HEK293 (cell line): ENCODE measurements at regions of chr1 and their contacts with region 1.

Region 1: GRCh38 chr1:32716312-32717148 is 14.0 kb upstream of the SYNC start:
- H3K4me3 ChIP-seq: no peak overlapping the region
- H3K27ac ChIP-seq: peak overlapping the region; percentile 3; the same call in 1 of the 2 replicates
- H3K4me1 ChIP-seq: no peaks in the 10 kb centered on the region
- CTCF ChIP-seq: no peak

Region 2: GRCh38 chr1:32521165-32521564 is 195.4 kb before region 1 on chr1:
- CTCF ChIA-PET with region 1: interaction called, 12 read pairs
- POLR2A ChIA-PET with region 1: no interaction called
- H3K4me3 ChIP-seq: no peak overlapping the region
- H3K27ac ChIP-seq: no peak overlapping the region
- H3K4me1 ChIP-seq: no peaks in the 10 kb centered on the region
- CTCF ChIP-seq: no peak

Region 3: GRCh38 chr1:32554288-32554687 is 162.2 kb before region 1 on chr1:
- CTCF ChIA-PET with region 1: no interaction called
- POLR2A ChIA-PET with region 1: no interaction called
- H3K4me3 ChIP-seq: no peak overlapping the region
- H3K27ac ChIP-seq: no peak overlapping the region
- H3K4me1 ChIP-seq: no peaks in the 10 kb centered on the region
- CTCF ChIP-seq: no peak

Region 4: GRCh38 chr1:32733582-32734321 is 17.2 kb after region 1 on chr1:
- CTCF ChIA-PET with region 1: interaction called, 18 read pairs
- POLR2A ChIA-PET with region 1: interaction called, 6 read pairs
- H3K4me3 ChIP-seq: no peak overlapping the region
- H3K27ac ChIP-seq: no peak overlapping the region
- H3K4me1 ChIP-seq: no peaks in the 10 kb centered on the region
- CTCF ChIP-seq: no peak

Region 5: DNA sequence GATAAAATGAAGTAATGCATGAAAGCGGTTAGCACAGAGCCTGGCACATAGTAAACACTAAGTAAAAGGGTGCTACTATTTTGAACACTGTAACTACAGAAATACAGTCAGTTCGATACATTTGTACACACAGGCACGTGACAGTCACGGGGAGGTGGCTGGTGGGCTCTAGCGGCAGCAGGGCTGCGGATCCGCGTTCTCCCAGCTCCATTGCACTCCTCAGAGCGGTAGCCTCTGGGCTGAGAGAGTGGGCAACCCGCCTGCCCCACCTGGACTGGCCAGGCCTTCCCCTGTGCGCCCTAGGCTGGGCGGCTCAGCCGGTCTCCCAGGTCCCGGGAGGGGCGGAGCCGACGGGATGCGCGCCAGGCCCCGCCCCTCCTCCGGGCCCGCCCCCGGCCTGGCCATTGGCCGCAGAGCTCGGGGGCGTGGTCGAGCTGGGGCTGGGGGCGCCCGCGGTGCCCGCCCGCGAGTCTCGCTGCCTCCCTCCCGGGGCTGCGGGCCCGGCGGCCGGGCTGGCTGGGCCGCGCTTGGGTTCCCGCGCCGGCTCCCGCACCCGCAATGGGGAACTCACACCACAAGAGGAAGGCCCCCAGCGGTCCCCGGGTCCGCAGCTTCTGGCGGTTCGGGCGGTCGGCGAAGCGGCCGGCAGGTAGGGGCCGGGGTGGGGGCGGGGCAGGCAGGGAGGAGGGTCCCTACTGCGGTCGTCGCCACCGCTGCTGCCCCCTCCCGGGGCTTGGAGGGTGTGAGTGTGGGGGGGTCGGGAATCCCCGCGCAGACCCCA is 37.2 kb after region 1 on chr1:
- CTCF ChIA-PET with region 1: interaction called, 16 read pairs
- POLR2A ChIA-PET with region 1: interaction called, 6 read pairs
- H3K4me3 ChIP-seq: peak overlapping the region; percentile 43
- H3K27ac ChIP-seq: no peak overlapping the region
- H3K4me1 ChIP-seq: peaks cover 2% of the 10 kb centered on the region; the same call in 1 of the 2 replicates
- CTCF ChIP-seq: no peak

Region 6: GRCh38 chr1:32773018-32773763 is 56.7 kb after region 1 on chr1:
- CTCF ChIA-PET with region 1: interaction called, 253 read pairs
- POLR2A ChIA-PET with region 1: interaction called, 41 read pairs
- H3K4me3 ChIP-seq: no peak overlapping the region
- H3K27ac ChIP-seq: no peak overlapping the region
- H3K4me1 ChIP-seq: no peaks in the 10 kb centered on the region
- CTCF ChIP-seq: peak; percentile 93

Region 7: GRCh38 chr1:32876341-32877210 is 160.0 kb after region 1 on chr1:
- CTCF ChIA-PET with region 1: interaction called, 12 read pairs
- POLR2A ChIA-PET with region 1: no interaction called
- H3K4me3 ChIP-seq: no peak overlapping the region
- H3K27ac ChIP-seq: no peak overlapping the region
- H3K4me1 ChIP-seq: no peaks in the 10 kb centered on the region
- CTCF ChIP-seq: peak; percentile 94

Region 8: DNA sequence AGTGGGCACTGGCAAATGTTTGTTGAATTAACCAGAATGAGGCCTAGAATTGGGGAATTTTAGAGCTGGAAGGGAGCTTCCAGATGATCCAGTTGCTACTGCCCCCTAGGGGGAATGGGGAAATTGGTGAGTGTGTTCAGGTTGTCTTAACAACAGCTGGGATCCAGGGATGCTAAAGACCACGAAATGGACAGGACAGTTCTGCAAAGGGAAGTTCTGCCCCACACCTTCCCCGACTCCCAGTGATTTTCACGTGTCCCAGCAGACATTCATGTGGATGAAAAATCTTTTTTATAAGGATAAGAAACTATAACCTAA is 431.4 kb after region 1 on chr1:
- CTCF ChIA-PET with region 1: no interaction called
- POLR2A ChIA-PET with region 1: no interaction called
- H3K4me3 ChIP-seq: no peak overlapping the region
- H3K27ac ChIP-seq: no peak overlapping the region
- H3K4me1 ChIP-seq: no peaks in the 10 kb centered on the region
- CTCF ChIP-seq: no peak